ENCODE measurements at regions of chr19 and their contacts with region 1.

Region 1: GRCh38 chr19:50724522-50725217 is 1.5 kb downstream of the CLEC11A start:
- DNase-seq: peak; percentile 99
- H3K4me3 ChIP-seq: peak overlapping the region; percentile 61 to 86 (median 62)
- H3K27ac ChIP-seq: peak overlapping the region; percentile 65 to 80 (median 70)
- H3K4me1 ChIP-seq: peaks cover 17 to 45% (median 32%) of the 10 kb centered on the region in 4 donors
- H3K27me3 ChIP-seq: peaks cover 0 to 77% (median 19%) of the 10 kb centered on the region in 4 donors
- CTCF ChIP-seq: peak; percentile 67 to 71 (median 69)
- EP300 ChIP-seq: no peak
- POLR2A ChIP-seq: peak; percentile 10

Region 2: GRCh38 chr19:50357178-50358100 is 367.2 kb before region 1 on chr19:
- intact Hi-C with region 1: no loop called
- DNase-seq: peak; percentile 94
- H3K4me3 ChIP-seq: peak overlapping the region; percentile 44 to 59 (median 52)
- H3K27ac ChIP-seq: peak overlapping the region; percentile 75 to 87 (median 86)
- H3K4me1 ChIP-seq: peaks cover 3 to 17% (median 15%) of the 10 kb centered on the region in 4 donors
- H3K27me3 ChIP-seq: no peaks in the 10 kb centered on the region
- CTCF ChIP-seq: peak; percentile 88 to 91 (median 88)
- EP300 ChIP-seq: no peak
- POLR2A ChIP-seq: no peak

Region 3: GRCh38 chr19:50695251-50696093 is 29.2 kb before region 1 on chr19:
- intact Hi-C with region 1: no loop called
- DNase-seq: no peak
- H3K4me3 ChIP-seq: no peak overlapping the region
- H3K27ac ChIP-seq: no peak overlapping the region
- H3K4me1 ChIP-seq: peaks cover 0 to 15% (median 5%) of the 10 kb centered on the region in 4 donors
- H3K27me3 ChIP-seq: peaks cover 0 to 95% (median 27%) of the 10 kb centered on the region in 4 donors
- CTCF ChIP-seq: no peak
- EP300 ChIP-seq: no peak
- POLR2A ChIP-seq: no peak

Region 4: DNA sequence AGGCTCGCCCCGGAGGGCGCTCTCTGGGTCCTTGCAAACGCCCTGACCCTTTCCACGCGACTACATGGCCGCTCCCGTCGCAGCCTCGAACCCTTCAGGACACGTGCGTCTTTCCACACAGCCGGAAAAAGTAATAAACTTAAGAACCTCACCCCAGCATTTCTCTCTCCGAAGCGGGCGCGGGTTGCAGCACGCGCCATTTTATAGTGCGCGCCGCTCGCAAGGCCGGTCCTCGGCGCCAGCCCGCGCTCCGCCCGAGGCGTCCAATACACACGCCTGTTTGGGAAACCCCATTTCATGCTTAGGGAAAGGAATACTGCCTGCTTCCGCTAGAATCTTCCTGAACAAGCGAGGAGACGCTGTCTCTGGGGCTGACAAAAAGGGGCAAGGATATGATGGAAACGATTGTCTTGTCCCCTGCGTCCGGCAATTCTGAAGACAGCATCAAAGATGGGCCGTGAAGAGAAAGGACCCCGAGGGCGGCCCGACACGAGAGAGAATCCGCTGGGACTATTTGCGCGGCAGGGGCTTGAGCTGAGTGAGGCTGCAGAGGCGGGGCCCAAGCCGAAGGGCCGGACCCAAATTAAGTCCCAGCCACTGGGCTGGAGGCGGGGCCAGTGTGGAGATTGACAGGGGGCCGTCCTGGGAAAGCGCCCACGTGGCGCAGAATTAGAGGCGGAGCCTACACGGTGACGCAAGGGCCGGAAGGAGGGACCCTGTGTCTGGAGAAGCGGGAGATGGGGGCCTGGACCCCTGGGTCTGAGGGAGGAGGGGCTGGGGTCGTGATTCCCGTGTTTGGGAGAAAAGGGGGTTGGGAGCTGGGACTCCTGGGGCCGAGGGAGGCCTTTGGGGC is 80.0 kb after region 1 on chr19:
- intact Hi-C with region 1: loop called (anchors 5 kb)
- DNase-seq: peak; percentile 99
- H3K4me3 ChIP-seq: peak overlapping the region; percentile 68 to 97 (median 86)
- H3K27ac ChIP-seq: peak overlapping the region; percentile 90 to 95 (median 94)
- H3K4me1 ChIP-seq: peaks cover 16 to 30% (median 27%) of the 10 kb centered on the region in 4 donors
- H3K27me3 ChIP-seq: no peaks in the 10 kb centered on the region
- CTCF ChIP-seq: peak in 1 of 3 experiments; percentile 8
- EP300 ChIP-seq: no peak
- POLR2A ChIP-seq: no peak